H1 (cell line): ENCODE measurements at regions of chr9 and their contacts with region 1.

Region 1: GRCh38 chr9:86614871-86615849 is 260.9 kb upstream of the TUT7 start:
- DNase-seq: peak in 1 of 2 experiments; percentile 58
- H3K4me3 ChIP-seq: no peak overlapping the region
- H3K27ac ChIP-seq: no peak overlapping the region
- H3K4me1 ChIP-seq: peaks cover 0 to 6% (median 2%) of the 10 kb centered on the region in 4 experiments; a peak in 4 of 7 replicates
- H3K27me3 ChIP-seq: peaks cover 0 to 3% (median 0%) of the 10 kb centered on the region in 4 experiments; a peak in 1 of 7 replicates
- CTCF ChIP-seq: peak in 2 of 3 experiments; percentile 52 to 67; a peak in 3 of 4 replicates
- EP300 ChIP-seq: no peak
- POLR2A ChIP-seq: no peak
- RAD21 ChIP-seq: peak; percentile 57 to 59

Region 2: GRCh38 chr9:86486891-86487837 is 128.0 kb before region 1 on chr9:
- CTCF ChIA-PET with region 1: interaction called, 17 read pairs
- POLR2A ChIA-PET with region 1: no interaction called
- DNase-seq: no peak
- H3K4me3 ChIP-seq: no peak overlapping the region
- H3K27ac ChIP-seq: no peak overlapping the region
- H3K4me1 ChIP-seq: no peaks in the 10 kb centered on the region
- H3K27me3 ChIP-seq: no peaks in the 10 kb centered on the region
- CTCF ChIP-seq: peak in 2 of 3 experiments; percentile 49 to 58; a peak in 2 of 4 replicates
- EP300 ChIP-seq: no peak
- POLR2A ChIP-seq: no peak
- RAD21 ChIP-seq: peak; percentile 86 to 88

Region 3: DNA sequence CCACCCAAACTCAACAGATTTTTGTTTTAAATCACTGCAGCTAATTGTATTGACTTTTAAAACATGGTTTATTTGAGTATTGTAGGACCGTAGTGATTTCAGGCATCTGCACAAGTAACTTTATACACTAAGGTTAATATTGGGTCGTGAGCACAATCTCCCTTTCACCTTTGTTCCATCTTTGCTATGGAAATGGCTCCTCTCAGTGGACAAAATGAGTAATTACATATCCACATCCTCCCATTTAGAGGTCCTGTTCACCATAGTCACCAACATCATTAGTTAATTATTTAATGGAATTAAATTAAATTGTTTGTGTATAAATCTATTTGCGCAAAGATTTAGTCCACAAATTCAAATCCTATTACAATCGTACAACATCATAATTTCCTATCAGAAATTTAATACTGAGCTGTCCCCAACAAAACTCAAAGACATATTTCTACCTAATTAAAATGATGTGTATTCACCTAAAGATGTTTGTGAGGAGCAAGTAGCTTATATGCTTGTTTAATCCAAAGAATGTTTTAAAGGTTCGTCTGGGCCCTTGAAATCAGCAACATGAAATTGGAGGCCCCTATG is 709.5 kb after region 1 on chr9:
- CTCF ChIA-PET with region 1: interaction called, 11 read pairs
- POLR2A ChIA-PET with region 1: no interaction called
- DNase-seq: no peak
- H3K4me3 ChIP-seq: no peak overlapping the region
- H3K27ac ChIP-seq: no peak overlapping the region
- H3K4me1 ChIP-seq: no peaks in the 10 kb centered on the region
- H3K27me3 ChIP-seq: no peaks in the 10 kb centered on the region
- CTCF ChIP-seq: peak in 2 of 3 experiments; percentile 63 to 65; a peak in 2 of 4 replicates
- EP300 ChIP-seq: no peak
- POLR2A ChIP-seq: no peak
- RAD21 ChIP-seq: peak; percentile 96